Endothelial cell of umbilical vein (primary cell): ENCODE measurements at regions of chr19 and their contacts with region 1.

Region 1: DNA sequence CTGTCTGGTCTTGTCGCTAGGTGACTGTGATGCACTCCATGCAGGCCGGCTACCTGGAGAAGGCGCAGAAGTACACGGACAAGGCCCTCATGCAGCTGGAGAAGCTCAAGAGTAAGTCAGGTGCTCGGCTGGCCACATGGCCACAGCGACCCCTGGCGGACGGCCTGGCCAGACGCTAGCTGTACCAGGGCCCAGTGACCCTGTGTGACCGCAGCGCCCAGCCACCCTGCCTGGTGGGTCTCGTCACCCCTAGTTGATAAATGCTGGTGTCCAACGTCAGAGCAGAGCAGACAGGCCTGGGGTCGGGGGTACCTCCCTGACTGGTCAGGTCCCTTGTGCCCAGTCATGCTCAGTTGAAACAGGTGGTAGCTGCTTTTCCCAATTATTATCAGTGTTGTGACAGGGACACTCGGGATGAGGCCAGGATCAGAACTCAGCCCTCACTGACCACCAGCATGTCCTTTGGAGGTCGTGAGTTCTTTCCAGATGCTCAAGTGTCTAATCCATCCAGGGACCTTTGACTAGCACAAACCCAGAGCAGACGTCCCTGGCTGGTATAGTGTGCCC is 22.2 kb downstream of the MAU2 start:
- DNase-seq: peak; percentile 43
- H3K4me3 ChIP-seq: no peak overlapping the region
- H3K27ac ChIP-seq: no peak overlapping the region
- H3K4me1 ChIP-seq: no peaks in the 10 kb centered on the region
- H3K27me3 ChIP-seq: no peaks in the 10 kb centered on the region
- CTCF ChIP-seq: peak; percentile 87 to 98
- POLR2A ChIP-seq: no peak

Region 2: DNA sequence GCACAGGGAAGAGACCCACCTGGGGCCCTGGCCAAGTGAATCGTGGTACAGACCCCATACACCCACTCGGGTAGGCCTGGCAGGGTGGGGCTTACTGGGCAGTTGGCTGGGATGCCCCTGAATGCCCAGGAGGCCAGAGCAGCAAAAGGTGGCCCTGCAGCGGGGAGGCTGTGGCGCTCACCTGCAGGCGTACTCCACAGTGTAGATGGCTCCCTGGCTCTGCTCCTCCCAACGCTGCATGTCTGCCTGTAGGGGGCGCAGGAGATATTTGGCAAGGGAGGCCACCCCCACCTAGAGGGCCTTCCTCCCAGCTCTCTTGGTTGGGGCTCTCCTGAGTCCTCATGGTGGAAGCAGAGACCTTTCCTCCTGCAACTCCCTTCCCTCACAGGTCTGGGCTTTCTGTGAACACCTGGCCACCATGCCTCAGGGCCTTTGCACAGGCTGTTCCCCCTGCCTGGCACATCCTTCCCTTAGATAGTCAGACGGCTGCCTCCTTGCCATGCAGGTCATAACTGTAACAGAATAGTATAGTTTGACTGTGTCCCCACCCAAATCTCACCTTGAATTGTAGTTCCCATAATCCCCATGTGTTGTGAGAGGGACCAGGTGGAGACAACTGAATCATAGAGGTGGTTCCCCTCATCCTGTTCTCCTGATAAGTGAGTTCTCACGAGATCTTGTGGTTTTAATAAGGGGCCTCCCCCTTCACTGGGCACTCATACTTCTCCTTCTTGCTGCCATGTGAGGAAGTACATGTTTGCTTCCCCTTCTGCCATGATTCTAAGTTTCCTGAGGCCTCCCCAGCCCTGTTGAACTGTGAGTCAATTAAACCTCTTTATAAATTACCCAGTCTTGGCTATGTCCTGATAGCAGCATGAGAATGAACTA is 156.7 kb before region 1 on chr19:
- CTCF ChIA-PET with region 1: interaction called, 16 read pairs
- POLR2A ChIA-PET with region 1: no interaction called
- dilution Hi-C with region 1: no loop called
- intact Hi-C with region 1: loop called (anchors 1 kb)
- DNase-seq: peak; percentile 15
- H3K4me3 ChIP-seq: no peak overlapping the region
- H3K27ac ChIP-seq: no peak overlapping the region
- H3K4me1 ChIP-seq: peaks cover 5% of the 10 kb centered on the region
- H3K27me3 ChIP-seq: no peaks in the 10 kb centered on the region
- CTCF ChIP-seq: peak; percentile 71 to 80
- POLR2A ChIP-seq: no peak

Region 3: DNA sequence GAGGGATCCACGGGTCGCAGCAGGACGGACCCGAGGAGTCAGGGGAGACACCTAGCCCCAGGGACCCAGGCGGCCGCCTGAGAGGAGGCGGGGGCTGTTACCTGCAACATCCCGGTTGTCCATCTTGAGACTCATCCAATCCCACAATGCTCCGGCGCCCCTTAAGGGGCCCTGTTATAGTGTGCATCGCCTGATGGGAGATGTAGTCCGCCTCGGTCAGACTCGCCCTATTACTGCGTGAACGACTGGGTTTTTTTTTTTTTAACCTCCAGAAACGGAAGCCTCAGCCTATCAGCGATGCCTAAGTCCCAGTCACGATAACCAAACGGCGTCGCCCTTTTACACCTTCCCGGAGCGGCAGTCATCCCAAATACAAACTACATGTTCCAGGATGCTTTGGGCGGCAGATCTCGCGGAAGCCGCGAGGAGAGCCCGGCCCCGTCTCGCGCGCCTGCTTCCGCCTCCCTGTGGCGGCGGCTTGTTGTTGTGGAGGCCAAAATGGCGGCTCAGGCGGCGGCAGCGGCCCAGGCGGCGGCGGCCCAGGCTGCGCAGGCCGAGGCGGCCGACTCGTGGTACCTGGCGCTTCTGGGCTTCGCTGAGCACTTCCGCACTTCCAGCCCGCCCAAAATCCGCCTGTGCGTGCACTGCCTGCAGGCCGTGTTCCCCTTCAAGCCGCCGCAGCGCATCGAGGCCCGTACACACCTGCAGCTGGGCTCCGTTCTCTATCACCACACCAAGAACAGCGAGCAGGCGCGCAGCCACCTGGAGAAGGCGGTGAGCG is 22.3 kb before region 1 on chr19 and contains the starts of genes MAU2 and SUGP1:
- CTCF ChIA-PET with region 1: interaction called, 10 read pairs
- POLR2A ChIA-PET with region 1: no interaction called
- dilution Hi-C with region 1: no loop called
- intact Hi-C with region 1: no loop called
- DNase-seq: peak; percentile 89
- H3K4me3 ChIP-seq: peak within 1 kb of the TSS; percentile 69 to 90 (median 83)
- H3K27ac ChIP-seq: peak within 1 kb of the TSS; percentile 94
- H3K4me1 ChIP-seq: peaks cover 13% of the 10 kb centered on the region
- H3K27me3 ChIP-seq: no peaks in the 10 kb centered on the region
- CTCF ChIP-seq: no peak
- POLR2A ChIP-seq: peak; percentile 78
- total RNA-seq, gene MAU2: 57.3 and 70.0 TPM in 2 replicates
- total RNA-seq, gene SUGP1: 59.9 and 64.7 TPM in 2 replicates

Region 4: GRCh38 chr19:19354932-19355331 is 12.1 kb after region 1 on chr19:
- CTCF ChIA-PET with region 1: interaction called, 51 read pairs
- POLR2A ChIA-PET with region 1: no interaction called
- dilution Hi-C with region 1: no loop called
- intact Hi-C with region 1: no loop called
- DNase-seq: no peak
- H3K4me3 ChIP-seq: no peak overlapping the region
- H3K27ac ChIP-seq: no peak overlapping the region
- H3K4me1 ChIP-seq: no peaks in the 10 kb centered on the region
- H3K27me3 ChIP-seq: no peaks in the 10 kb centered on the region
- CTCF ChIP-seq: no peak
- POLR2A ChIP-seq: no peak